Heart right ventricle (tissue), 16 donors: ENCODE measurements at regions of chr1 and their contacts with region 1.

Region 1: GRCh38 chr1:119008483-119009311 is 20.6 kb upstream of the TBX15 start:
- DNase-seq: peak in 1 of 2 donors; percentile 36
- ATAC-seq: peak in 7 of 8 donors; percentile 53 to 85 (median 72)
- H3K4me3 ChIP-seq: peak overlapping the region; percentile 7 to 39 (median 32)
- H3K27ac ChIP-seq: no peak overlapping the region
- H3K4me1 ChIP-seq: peaks cover 10 to 32% (median 19%) of the 10 kb centered on the region in 9 donors
- H3K27me3 ChIP-seq: peaks cover 23 to 77% (median 63%) of the 10 kb centered on the region in 7 donors
- CTCF ChIP-seq: peak; percentile 26 to 74 (median 65)

Region 2: DNA sequence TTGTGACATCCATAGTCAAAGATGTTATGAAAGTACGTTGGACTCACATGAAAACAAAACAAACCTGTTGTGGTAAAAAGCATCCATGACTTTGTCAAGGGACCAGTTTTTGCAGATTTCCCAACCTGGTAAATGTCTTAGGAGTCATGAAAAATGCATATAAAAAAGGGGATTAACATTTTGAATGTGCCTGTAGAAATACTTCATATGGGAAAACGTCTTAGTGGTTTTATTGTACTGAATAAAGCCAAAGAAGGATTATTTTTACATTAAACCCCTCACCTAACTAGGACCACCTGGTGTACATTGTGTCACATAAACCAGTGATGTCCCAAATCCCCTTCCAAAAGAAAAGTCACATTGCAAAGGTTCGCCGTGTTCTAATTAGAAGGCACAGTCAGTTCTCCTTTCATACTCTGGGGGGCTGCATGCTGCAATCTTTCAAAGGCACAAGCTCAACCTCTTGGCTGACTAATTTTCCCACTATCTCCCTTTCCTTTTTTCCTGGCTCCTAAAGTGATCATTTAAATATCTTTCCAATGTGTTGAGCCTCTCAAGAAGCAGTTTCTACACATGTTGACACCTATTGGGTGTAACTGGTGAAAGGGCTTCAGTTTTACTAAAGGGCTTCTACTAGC is 703.9 kb before region 1 on chr1:
- intact Hi-C with region 1: loop called in 1 of 10 experiments (anchors 2 kb)
- DNase-seq: no peak
- ATAC-seq: peak in 7 of 8 donors; percentile 31 to 80 (median 57)
- H3K4me3 ChIP-seq: no peak overlapping the region
- H3K27ac ChIP-seq: no peak overlapping the region
- H3K4me1 ChIP-seq: peaks cover 0 to 26% (median 5%) of the 10 kb centered on the region in 9 donors
- H3K27me3 ChIP-seq: no peaks in the 10 kb centered on the region
- CTCF ChIP-seq: peak; percentile 9 to 61 (median 46)

Region 3: GRCh38 chr1:118862755-118863154 is 145.9 kb before region 1 on chr1:
- intact Hi-C with region 1: no loop called
- DNase-seq: no peak
- ATAC-seq: no peak
- H3K4me3 ChIP-seq: no peak overlapping the region
- H3K27ac ChIP-seq: no peak overlapping the region
- H3K4me1 ChIP-seq: no peaks in the 10 kb centered on the region
- H3K27me3 ChIP-seq: no peaks in the 10 kb centered on the region
- CTCF ChIP-seq: no peak

Region 4: GRCh38 chr1:119075614-119076013 is 66.9 kb after region 1 on chr1:
- intact Hi-C with region 1: no loop called
- DNase-seq: no peak
- ATAC-seq: peak in 2 of 8 donors; percentile 42 to 79
- H3K4me3 ChIP-seq: no peak overlapping the region
- H3K27ac ChIP-seq: no peak overlapping the region
- H3K4me1 ChIP-seq: peaks cover 0 to 16% (median 3%) of the 10 kb centered on the region in 9 donors
- H3K27me3 ChIP-seq: no peaks in the 10 kb centered on the region
- CTCF ChIP-seq: no peak